Endothelial cell of umbilical vein (primary cell): ENCODE measurements at regions of chr20 and their contacts with region 1.

Region 1: DNA sequence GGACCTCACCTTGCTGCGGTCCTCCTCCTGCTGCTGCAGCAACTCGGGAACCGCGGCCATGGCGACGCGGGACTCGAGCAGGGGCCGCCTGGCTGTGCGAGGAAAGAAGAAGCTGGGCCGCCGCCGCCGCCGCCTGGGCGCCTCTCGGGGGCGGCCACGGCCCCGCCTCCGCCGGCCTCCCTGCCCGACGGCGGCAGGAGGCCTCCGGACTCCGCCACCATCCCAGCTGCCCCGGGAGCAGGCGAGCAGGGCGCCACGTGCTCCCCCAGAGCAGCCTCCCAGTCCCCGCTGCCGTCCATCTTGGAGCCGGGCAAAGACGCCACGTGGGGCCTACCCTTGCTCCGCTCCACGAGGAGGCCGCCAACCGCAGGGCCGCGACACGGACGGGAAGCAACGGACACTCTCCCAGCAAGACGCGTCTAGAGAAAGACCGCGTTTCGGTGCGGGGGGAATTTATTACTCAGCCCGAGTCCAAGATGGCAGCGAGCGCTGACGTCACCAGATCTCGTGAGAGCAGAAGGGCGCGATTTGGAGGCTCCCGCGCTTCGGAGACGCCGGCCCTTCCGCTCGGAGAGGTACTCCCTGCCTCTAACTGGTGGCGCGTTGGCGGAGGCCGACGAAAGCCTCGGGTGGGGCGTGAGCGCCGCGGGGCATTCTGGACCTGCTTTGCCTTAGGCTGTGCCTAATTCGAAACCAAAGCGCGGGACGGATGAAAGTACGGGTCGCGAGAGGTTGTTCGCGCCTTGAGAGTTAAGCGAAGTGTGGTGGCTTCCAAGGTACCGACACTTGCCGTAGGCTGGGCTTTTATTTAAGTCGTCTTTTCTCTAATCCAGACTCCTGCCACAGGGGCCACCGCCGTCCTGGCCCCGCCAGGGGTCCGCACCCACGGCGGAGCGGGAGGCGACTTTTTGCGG is at the starts of genes MGME1 and SNX5:
- DNase-seq: peak; percentile 100
- H3K4me3 ChIP-seq: peak within 1 kb of the TSS; percentile 76 to 97 (median 97)
- H3K27ac ChIP-seq: peak within 1 kb of the TSS; percentile 92
- H3K4me1 ChIP-seq: peaks cover 62% of the 10 kb centered on the region
- H3K27me3 ChIP-seq: no peaks in the 10 kb centered on the region
- CTCF ChIP-seq: no peak
- POLR2A ChIP-seq: peak; percentile 92
- total RNA-seq, gene MGME1: 18.0 and 26.2 TPM in 2 replicates
- total RNA-seq, gene SNX5: 109 and 121 TPM in 2 replicates

Region 2: GRCh38 chr20:17916433-17916891 is 52.2 kb before region 1 on chr20:
- CTCF ChIA-PET with region 1: no interaction called
- POLR2A ChIA-PET with region 1: no interaction called
- dilution Hi-C with region 1: no loop called
- intact Hi-C with region 1: no loop called
- DNase-seq: no peak
- H3K4me3 ChIP-seq: no peak overlapping the region
- H3K27ac ChIP-seq: no peak overlapping the region
- H3K4me1 ChIP-seq: no peaks in the 10 kb centered on the region
- H3K27me3 ChIP-seq: peaks cover 4 to 5% of the 10 kb centered on the region in 2 experiments
- CTCF ChIP-seq: no peak
- POLR2A ChIP-seq: no peak

Region 3: GRCh38 chr20:17952692-17953684 is 15.6 kb before region 1 on chr20:
- CTCF ChIA-PET with region 1: interaction called, 79 read pairs
- POLR2A ChIA-PET with region 1: interaction called, 5 read pairs
- dilution Hi-C with region 1: no loop called
- intact Hi-C with region 1: loop called (anchors 1 kb)
- DNase-seq: no peak
- H3K4me3 ChIP-seq: no peak overlapping the region
- H3K27ac ChIP-seq: no peak overlapping the region
- H3K4me1 ChIP-seq: peaks cover 4% of the 10 kb centered on the region
- H3K27me3 ChIP-seq: no peaks in the 10 kb centered on the region
- CTCF ChIP-seq: no peak
- POLR2A ChIP-seq: no peak

Region 4: DNA sequence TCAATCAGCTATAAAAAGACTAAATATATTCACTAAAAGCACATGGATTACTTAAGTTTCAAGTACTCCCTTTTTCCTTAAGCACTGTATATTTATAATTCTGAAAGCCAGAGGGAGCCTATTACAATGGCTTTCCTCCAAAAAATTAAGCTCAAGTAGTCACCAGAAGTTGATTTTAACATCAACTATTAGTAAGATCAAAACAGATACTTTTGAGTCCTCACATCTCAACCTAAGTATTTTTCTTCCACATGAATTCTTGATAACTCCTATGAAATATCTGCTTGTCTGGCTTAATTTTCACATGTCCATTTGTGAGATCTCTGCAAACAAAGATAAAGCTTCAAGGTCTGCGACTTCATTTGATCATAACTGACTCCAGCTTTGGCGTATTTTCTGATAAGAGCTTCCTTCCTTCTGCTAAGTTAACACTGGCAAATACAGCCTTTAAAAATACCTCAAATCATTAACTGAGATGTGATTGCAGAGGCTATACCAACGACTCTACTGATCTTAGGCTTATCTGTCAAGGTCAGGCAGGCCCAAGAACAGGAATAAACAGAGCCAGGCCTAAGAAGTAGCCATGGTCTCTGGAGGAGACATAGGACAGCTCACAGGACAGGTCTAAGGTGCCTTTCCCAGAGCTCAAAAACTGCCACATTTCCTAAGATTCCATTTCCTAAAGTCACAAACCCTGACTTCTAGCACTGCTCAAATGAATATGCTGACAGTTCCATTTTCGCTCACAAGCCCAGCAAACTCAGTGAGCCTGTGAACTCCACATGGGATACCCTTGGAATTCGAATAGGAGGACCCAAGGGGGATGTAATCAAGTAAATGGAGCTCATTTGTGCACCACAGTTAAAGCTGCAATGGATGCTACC is 10.0 kb before region 1 on chr20:
- CTCF ChIA-PET with region 1: interaction called, 79 read pairs
- POLR2A ChIA-PET with region 1: interaction called, 5 read pairs
- dilution Hi-C with region 1: no loop called
- intact Hi-C with region 1: loop called (anchors 1 kb)
- DNase-seq: peak; percentile 75
- H3K4me3 ChIP-seq: no peak overlapping the region
- H3K27ac ChIP-seq: no peak overlapping the region
- H3K4me1 ChIP-seq: peaks cover 49% of the 10 kb centered on the region
- H3K27me3 ChIP-seq: no peaks in the 10 kb centered on the region
- CTCF ChIP-seq: no peak
- POLR2A ChIP-seq: peak; percentile 19